PC-3 (cell line): ENCODE measurements at regions of chr6 and their contacts with region 1.

Region 1: DNA sequence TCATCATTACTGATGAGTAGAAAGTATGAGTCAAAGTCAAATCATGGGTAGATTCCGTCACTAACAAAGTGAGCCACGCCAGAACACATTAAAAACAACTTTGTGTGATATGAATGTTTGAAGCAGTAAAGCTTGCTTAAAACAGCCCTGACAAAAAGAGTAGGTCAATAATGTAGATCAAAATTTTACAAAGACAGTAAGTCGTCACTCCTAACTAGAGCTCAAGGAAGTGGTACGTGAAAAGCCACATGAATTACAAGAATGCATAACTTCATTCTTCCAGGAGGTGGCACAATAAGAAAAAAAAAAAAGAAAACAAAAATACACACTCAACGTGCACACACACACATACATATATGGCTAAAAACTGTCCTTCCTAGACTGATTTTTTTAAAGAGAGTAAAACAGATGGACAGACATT is 69.9 kb downstream of the HACE1 start:
- DNase-seq: peak; percentile 48
- ATAC-seq: peak; percentile 61; the same call in 1 of the 2 replicates
- H3K4me3 ChIP-seq: 0 out of 2 replicates have a peak overlapping the region, but pooled peaks have one; percentile 26
- H3K27ac ChIP-seq: no peak overlapping the region
- H3K4me1 ChIP-seq: no peaks in the 10 kb centered on the region; the same call in 1 of the 2 replicates
- H3K27me3 ChIP-seq: no peaks in the 10 kb centered on the region
- CTCF ChIP-seq: peak; percentile 60

Region 2: GRCh38 chr6:104859225-104860146 is 69.7 kb after region 1 on chr6 and contains the start of gene HACE1:
- CTCF ChIA-PET with region 1: no interaction called
- POLR2A ChIA-PET with region 1: no interaction called
- intact Hi-C with region 1: loop called (anchors 2 kb)
- DNase-seq: peak; percentile 83
- ATAC-seq: peak; percentile 98
- H3K4me3 ChIP-seq: peak within 1 kb of the TSS; percentile 97
- H3K27ac ChIP-seq: no peak within 1 kb of the TSS
- H3K4me1 ChIP-seq: peaks cover 5% of the 10 kb centered on the region; the same call in 1 of the 2 replicates
- H3K27me3 ChIP-seq: no peaks in the 10 kb centered on the region
- CTCF ChIP-seq: no peak
- total RNA-seq, gene HACE1: 4.3 and 9.4 TPM in 2 replicates

Region 3: GRCh38 chr6:104896914-104897313 is 107.1 kb after region 1 on chr6:
- CTCF ChIA-PET with region 1: no interaction called
- POLR2A ChIA-PET with region 1: no interaction called
- intact Hi-C with region 1: no loop called
- DNase-seq: peak; percentile 19
- ATAC-seq: no peak
- H3K4me3 ChIP-seq: no peak overlapping the region
- H3K27ac ChIP-seq: no peak overlapping the region
- H3K4me1 ChIP-seq: no peaks in the 10 kb centered on the region
- H3K27me3 ChIP-seq: no peaks in the 10 kb centered on the region
- CTCF ChIP-seq: peak; percentile 39; the same call in 1 of the 2 replicates

Region 4: DNA sequence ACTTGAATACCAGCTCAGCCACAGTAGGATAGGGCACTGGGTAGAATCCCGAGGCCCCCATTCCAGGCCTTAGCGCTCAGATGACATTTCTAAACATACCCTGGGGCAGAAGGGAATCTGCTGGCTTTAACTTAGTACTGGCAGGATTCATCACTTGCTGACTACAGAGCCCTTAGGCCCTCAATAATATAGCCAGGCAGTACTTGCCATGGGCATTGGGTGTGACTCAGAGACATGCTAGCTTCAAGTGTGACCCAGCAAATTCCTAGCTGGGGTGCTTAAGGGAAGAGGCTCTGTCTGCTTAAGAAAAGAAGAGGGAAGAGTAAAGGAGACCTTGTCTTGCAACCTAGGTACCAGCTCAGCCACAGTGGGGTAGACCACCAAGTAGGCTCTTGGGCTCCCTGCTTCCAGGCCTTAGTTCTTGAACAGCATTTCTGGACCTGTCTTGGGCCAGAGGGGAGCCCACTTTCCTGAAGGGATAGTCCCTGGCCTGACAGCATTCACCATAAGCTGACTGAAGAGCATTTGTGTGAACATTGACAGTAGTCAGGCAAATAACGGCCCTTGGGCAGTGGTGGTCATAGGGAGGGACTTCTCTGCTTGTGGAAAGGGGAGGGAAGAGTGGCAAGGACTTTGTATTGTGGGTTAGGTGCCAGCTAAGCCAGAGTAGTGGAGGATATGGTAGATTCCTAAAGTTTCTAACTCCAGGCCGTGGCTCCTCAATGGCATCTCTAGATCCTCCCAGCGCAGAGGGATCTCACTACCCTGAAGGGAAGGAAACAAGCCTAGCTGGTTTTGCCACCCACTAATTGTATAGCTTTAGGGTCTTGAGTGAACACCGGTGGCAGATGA is 118.5 kb after region 1 on chr6:
- CTCF ChIA-PET with region 1: no interaction called
- POLR2A ChIA-PET with region 1: no interaction called
- intact Hi-C with region 1: no loop called
- DNase-seq: peak; percentile 13
- ATAC-seq: no peak
- H3K4me3 ChIP-seq: no peak overlapping the region
- H3K27ac ChIP-seq: no peak overlapping the region
- H3K4me1 ChIP-seq: no peaks in the 10 kb centered on the region
- H3K27me3 ChIP-seq: no peaks in the 10 kb centered on the region
- CTCF ChIP-seq: no peak

Region 5: GRCh38 chr6:104940881-104941728 is 151.3 kb after region 1 on chr6:
- CTCF ChIA-PET with region 1: no interaction called
- POLR2A ChIA-PET with region 1: no interaction called
- intact Hi-C with region 1: loop called (anchors 10 kb)
- DNase-seq: peak; percentile 16
- ATAC-seq: peak; percentile 58
- H3K4me3 ChIP-seq: peak overlapping the region; percentile 38; the same call in 1 of the 2 replicates
- H3K27ac ChIP-seq: no peak overlapping the region
- H3K4me1 ChIP-seq: no peaks in the 10 kb centered on the region
- H3K27me3 ChIP-seq: peaks cover 14% of the 10 kb centered on the region
- CTCF ChIP-seq: peak; percentile 47

Region 6: GRCh38 chr6:105077596-105078385 is 288.0 kb after region 1 on chr6:
- CTCF ChIA-PET with region 1: interaction called, 11 read pairs
- POLR2A ChIA-PET with region 1: no interaction called
- intact Hi-C with region 1: loop called (anchors 5 kb)
- DNase-seq: peak; percentile 71
- ATAC-seq: peak; percentile 61
- H3K4me3 ChIP-seq: no peak overlapping the region
- H3K27ac ChIP-seq: no peak overlapping the region; the same call in 1 of the 2 replicates
- H3K4me1 ChIP-seq: peaks cover 20% of the 10 kb centered on the region
- H3K27me3 ChIP-seq: no peaks in the 10 kb centered on the region
- CTCF ChIP-seq: peak; percentile 78